ENCODE measurements at regions of chr1 and their contacts with region 1.

Region 1: GRCh38 chr1:203127666-203128430 is at the start of gene ADORA1:
- DNase-seq: peak; percentile 66
- H3K4me3 Mint-ChIP-seq: peak within 1 kb of the TSS; percentile 72
- H3K27ac Mint-ChIP-seq: no peak within 1 kb of the TSS
- H3K4me1 Mint-ChIP-seq: peaks cover 31% of the 10 kb centered on the region
- H3K27me3 Mint-ChIP-seq: peaks cover 68% of the 10 kb centered on the region
- CTCF ChIP-seq: no peak
- total RNA-seq, gene ADORA1: 1.5 and 1.7 TPM in 2 replicates

Region 2: DNA sequence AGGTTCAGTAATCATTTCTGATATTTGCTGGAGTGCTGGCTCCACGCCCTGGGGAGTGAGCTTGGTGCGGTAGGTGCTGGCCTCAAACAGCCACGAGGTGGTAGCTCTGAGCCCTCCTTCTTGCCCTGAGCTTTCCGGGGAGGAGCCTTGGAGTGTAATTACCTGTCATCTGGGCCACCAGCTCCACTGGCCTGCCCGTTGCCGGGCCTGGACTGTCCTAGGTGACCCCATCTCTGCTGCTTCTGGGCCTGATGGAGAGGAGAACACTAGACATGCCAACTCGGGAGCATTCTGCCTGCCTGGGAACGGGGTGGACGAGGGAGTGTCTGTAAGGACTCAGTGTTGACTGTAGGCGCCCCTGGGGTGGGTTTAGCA is 38.7 kb after region 1 on chr1:
- CTCF ChIA-PET with region 1: interaction called, 11 read pairs
- intact Hi-C with region 1: no loop called
- DNase-seq: peak; percentile 58
- H3K4me3 Mint-ChIP-seq: no peak overlapping the region
- H3K27ac Mint-ChIP-seq: no peak overlapping the region
- H3K4me1 Mint-ChIP-seq: peaks cover 7% of the 10 kb centered on the region
- H3K27me3 Mint-ChIP-seq: peaks cover 87% of the 10 kb centered on the region
- CTCF ChIP-seq: no peak

Region 3: DNA sequence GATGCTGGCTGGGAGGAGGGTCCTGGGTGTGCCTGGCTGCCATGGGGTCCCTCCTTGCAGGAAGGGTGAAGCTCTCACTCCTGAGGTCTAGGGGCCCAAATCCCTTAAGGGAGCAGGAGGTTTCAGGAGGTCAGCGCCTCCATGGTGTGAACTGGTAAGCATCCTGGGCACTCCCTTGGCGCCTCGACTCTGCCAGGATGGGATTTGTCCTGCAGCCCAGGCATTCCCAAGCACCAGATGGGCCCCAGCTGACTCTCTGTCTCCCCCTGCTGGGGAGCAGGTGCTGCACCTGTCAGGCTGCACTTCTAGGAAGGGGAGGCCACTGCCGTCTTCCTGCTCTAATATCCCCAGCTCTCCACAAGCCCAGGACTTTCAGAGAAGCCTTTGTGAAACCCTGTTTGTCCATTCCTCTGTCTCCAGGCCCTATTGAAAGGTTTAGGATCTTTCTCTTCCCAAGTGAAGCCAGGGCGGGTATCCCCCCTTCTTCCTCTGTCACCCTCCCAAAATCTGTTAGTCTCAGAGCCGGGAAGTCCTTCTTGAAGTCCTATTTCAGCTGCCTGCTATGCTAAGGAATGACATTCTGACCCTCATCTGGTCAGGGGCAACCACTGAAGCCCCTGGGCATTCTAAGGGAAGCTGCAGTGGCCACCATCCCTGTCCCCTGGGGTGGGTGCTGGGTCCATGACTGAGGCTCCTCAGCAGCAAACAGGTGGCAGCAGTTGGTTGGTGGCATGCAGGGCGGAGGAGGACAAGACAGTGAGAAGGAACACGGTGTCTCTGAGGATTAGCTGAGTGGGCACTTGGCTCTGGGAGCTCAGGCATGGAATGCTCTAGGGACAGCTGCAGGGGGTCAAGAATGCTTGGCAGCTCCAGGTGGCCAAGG is 44.5 kb after region 1 on chr1:
- CTCF ChIA-PET with region 1: interaction called, 11 read pairs
- intact Hi-C with region 1: no loop called
- DNase-seq: peak; percentile 91
- H3K4me3 Mint-ChIP-seq: no peak overlapping the region
- H3K27ac Mint-ChIP-seq: no peak overlapping the region
- H3K4me1 Mint-ChIP-seq: no peaks in the 10 kb centered on the region
- H3K27me3 Mint-ChIP-seq: peaks cover 77% of the 10 kb centered on the region
- CTCF ChIP-seq: peak; percentile 97